ENCODE measurements at regions of chr5 and their contacts with region 1.

Region 1: GRCh38 chr5:50564079-50564478 is 102.4 kb upstream of the PARP8 start:
- DNase-seq: peak in 1 of 2 donors; percentile 71
- ATAC-seq: peak; percentile 94 to 98 (median 94)
- H3K4me3 ChIP-seq: no peak overlapping the region
- H3K4me3 Mint-ChIP-seq: peak overlapping the region; percentile 64
- H3K27ac ChIP-seq: peak overlapping the region; percentile 85
- H3K27ac Mint-ChIP-seq: peak overlapping the region; percentile 84 to 86
- H3K4me1 ChIP-seq: peaks cover 4% of the 10 kb centered on the region
- H3K4me1 Mint-ChIP-seq: peaks cover 31 to 50% of the 10 kb centered on the region in 2 donors
- H3K27me3 ChIP-seq: no peaks in the 10 kb centered on the region
- H3K27me3 Mint-ChIP-seq: no peaks in the 10 kb centered on the region
- CTCF ChIP-seq: no peak

Region 2: DNA sequence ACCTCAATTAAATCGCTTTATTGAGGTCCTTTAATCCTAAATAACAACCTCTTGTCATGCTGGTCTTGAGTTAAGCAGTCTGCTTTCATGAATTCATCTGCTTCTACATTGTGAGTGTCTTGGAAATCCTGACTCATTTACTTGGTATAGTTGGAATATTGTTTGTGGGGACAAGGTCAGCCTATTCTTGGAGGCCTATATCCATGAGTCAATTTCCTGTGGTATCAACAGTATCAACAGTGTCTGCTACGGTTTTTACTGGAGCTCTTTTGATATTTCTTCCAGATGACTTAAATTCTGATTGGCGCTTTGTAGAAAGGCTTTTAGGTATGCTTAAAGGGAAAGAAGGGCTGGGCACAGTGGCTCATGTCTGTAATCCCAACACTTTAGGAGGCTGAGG is 31.1 kb after region 1 on chr5:
- intact Hi-C with region 1: loop called (anchors 2 kb)
- DNase-seq: no peak
- ATAC-seq: peak in 1 of 3 donors; percentile 44
- H3K4me3 ChIP-seq: no peak overlapping the region
- H3K4me3 Mint-ChIP-seq: peak overlapping the region; percentile 45
- H3K27ac ChIP-seq: peak overlapping the region; percentile 38
- H3K27ac Mint-ChIP-seq: peak overlapping the region; percentile 82 to 84
- H3K4me1 ChIP-seq: peaks cover 27% of the 10 kb centered on the region
- H3K4me1 Mint-ChIP-seq: peaks cover 73 to 75% of the 10 kb centered on the region in 2 donors
- H3K27me3 ChIP-seq: no peaks in the 10 kb centered on the region
- H3K27me3 Mint-ChIP-seq: no peaks in the 10 kb centered on the region
- CTCF ChIP-seq: no peak

Region 3: DNA sequence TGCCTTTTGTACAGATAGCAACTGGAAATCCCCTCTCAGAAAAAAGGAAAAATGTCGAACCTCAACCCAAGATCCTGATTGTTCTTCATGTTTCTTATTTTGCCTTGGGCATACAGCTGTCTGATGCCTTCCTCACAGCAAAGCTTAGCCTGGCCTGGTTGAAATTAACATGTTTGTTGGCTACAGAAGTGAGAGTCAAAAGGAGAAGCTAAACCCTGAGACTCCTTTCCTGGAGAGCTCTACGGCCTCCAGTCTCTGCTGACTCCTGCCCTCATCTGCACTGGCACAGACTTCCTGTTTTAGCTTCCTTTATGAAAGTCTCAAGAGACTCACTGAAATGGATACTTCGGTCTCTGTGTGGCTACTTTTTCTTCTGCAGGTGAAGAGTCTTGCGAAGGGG is 289.1 kb after region 1 on chr5:
- intact Hi-C with region 1: no loop called
- DNase-seq: peak in 1 of 2 donors; percentile 7
- ATAC-seq: peak in 2 of 3 donors; percentile 45 to 57
- H3K4me3 ChIP-seq: no peak overlapping the region
- H3K4me3 Mint-ChIP-seq: no peak overlapping the region
- H3K27ac ChIP-seq: no peak overlapping the region
- H3K27ac Mint-ChIP-seq: peak overlapping the region; percentile 29 to 30
- H3K4me1 ChIP-seq: peaks cover 9% of the 10 kb centered on the region
- H3K4me1 Mint-ChIP-seq: peaks cover 18 to 30% of the 10 kb centered on the region in 2 donors
- H3K27me3 ChIP-seq: no peaks in the 10 kb centered on the region
- H3K27me3 Mint-ChIP-seq: no peaks in the 10 kb centered on the region
- CTCF ChIP-seq: no peak

Region 4: DNA sequence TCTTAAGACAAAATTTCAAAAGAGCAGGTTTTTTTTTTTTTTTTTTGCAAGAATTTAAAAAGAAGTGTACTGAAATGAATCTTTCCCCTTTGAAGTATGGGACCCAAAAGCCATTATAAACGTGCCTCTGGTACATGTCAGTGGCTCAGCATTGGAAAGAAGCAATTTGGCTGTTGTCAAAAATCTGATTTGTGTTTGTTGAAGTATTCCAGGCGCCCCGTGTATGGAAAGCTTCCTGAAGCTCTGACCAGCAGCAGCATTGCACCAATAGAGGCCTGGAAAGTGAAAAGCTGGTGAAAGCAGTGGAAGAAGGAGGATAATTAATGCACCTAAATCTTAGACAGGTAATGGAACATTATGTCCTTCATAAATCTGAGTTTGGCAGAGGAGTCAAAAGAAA is 317.3 kb after region 1 on chr5:
- intact Hi-C with region 1: no loop called
- DNase-seq: no peak
- ATAC-seq: no peak
- H3K4me3 ChIP-seq: no peak overlapping the region
- H3K4me3 Mint-ChIP-seq: no peak overlapping the region
- H3K27ac ChIP-seq: no peak overlapping the region
- H3K27ac Mint-ChIP-seq: no peak overlapping the region
- H3K4me1 ChIP-seq: no peaks in the 10 kb centered on the region
- H3K4me1 Mint-ChIP-seq: no peaks in the 10 kb centered on the region
- H3K27me3 ChIP-seq: no peaks in the 10 kb centered on the region
- H3K27me3 Mint-ChIP-seq: peaks cover 20 to 29% of the 10 kb centered on the region in 2 donors
- CTCF ChIP-seq: no peak